GM12878 (cell line): ENCODE measurements at regions of chr12 and their contacts with region 1.

Region 1: GRCh38 chr12:29901585-29901984 is 117.8 kb upstream of the TMTC1 start:
- DNase-seq: no peak
- ATAC-seq: no peak; the same call in 2 of the 3 replicates
- H3K4me3 ChIP-seq: no peak overlapping the region
- H3K27ac ChIP-seq: no peak overlapping the region
- H3K4me1 ChIP-seq: no peaks in the 10 kb centered on the region
- H3K27me3 ChIP-seq: no peaks in the 10 kb centered on the region
- CTCF ChIP-seq: peak in 1 of 3 experiments; percentile 38; a peak in 1 of 6 replicates
- EP300 ChIP-seq: no peak
- POLR2A ChIP-seq: no peak
- RAD21 ChIP-seq: no peak

Region 2: GRCh38 chr12:29889737-29890136 is 11.8 kb before region 1 on chr12:
- CTCF ChIA-PET with region 1: interaction called, 19 read pairs
- POLR2A ChIA-PET with region 1: no interaction called
- RAD21 ChIA-PET with region 1: interaction called, 4 read pairs
- SMC1A ChIA-PET with region 1: interaction called, 9 read pairs
- in situ Hi-C with region 1: no loop called
- intact Hi-C with region 1: no loop called
- DNase-seq: no peak
- ATAC-seq: no peak
- H3K4me3 ChIP-seq: no peak overlapping the region
- H3K27ac ChIP-seq: no peak overlapping the region
- H3K4me1 ChIP-seq: no peaks in the 10 kb centered on the region
- H3K27me3 ChIP-seq: no peaks in the 10 kb centered on the region
- CTCF ChIP-seq: peak; percentile 10 to 44 (median 22); a peak in 3 of 6 replicates
- EP300 ChIP-seq: no peak
- POLR2A ChIP-seq: no peak
- RAD21 ChIP-seq: 0 out of 2 replicates have a peak, but pooled peaks have one; percentile 20

Region 3: DNA sequence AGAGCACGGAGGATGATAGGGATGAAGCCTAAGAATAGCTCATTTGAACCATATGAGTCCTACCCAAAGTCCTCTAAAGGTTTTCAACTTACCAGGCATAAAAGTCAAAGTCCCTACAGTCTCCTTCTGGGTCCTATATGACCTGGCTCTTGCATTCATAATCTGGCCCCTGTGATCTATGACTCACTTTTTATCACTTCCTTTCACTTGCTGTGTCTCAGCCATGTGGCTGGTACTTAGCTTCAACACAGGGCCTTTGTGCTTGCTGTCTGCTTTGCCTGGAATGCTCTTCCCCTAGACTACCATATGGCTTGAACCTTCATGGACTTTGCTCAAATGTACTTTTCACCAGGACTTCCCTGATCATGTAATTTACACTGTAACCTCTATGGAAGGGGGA is 19.7 kb after region 1 on chr12:
- CTCF ChIA-PET with region 1: no interaction called
- POLR2A ChIA-PET with region 1: no interaction called
- RAD21 ChIA-PET with region 1: no interaction called
- SMC1A ChIA-PET with region 1: no interaction called
- in situ Hi-C with region 1: no loop called
- intact Hi-C with region 1: no loop called
- DNase-seq: no peak
- ATAC-seq: peak; percentile 50; the same call in 2 of the 3 replicates
- H3K4me3 ChIP-seq: no peak overlapping the region
- H3K27ac ChIP-seq: no peak overlapping the region
- H3K4me1 ChIP-seq: no peaks in the 10 kb centered on the region
- H3K27me3 ChIP-seq: no peaks in the 10 kb centered on the region
- CTCF ChIP-seq: no peak
- EP300 ChIP-seq: no peak
- POLR2A ChIP-seq: no peak
- RAD21 ChIP-seq: no peak

Region 4: GRCh38 chr12:29940811-29941210 is 39.2 kb after region 1 on chr12:
- CTCF ChIA-PET with region 1: no interaction called
- POLR2A ChIA-PET with region 1: no interaction called
- RAD21 ChIA-PET with region 1: no interaction called
- SMC1A ChIA-PET with region 1: no interaction called
- in situ Hi-C with region 1: no loop called
- intact Hi-C with region 1: no loop called
- DNase-seq: no peak
- ATAC-seq: no peak
- H3K4me3 ChIP-seq: no peak overlapping the region
- H3K27ac ChIP-seq: no peak overlapping the region
- H3K4me1 ChIP-seq: no peaks in the 10 kb centered on the region
- H3K27me3 ChIP-seq: no peaks in the 10 kb centered on the region
- CTCF ChIP-seq: no peak
- EP300 ChIP-seq: no peak
- POLR2A ChIP-seq: no peak
- RAD21 ChIP-seq: no peak

Region 5: DNA sequence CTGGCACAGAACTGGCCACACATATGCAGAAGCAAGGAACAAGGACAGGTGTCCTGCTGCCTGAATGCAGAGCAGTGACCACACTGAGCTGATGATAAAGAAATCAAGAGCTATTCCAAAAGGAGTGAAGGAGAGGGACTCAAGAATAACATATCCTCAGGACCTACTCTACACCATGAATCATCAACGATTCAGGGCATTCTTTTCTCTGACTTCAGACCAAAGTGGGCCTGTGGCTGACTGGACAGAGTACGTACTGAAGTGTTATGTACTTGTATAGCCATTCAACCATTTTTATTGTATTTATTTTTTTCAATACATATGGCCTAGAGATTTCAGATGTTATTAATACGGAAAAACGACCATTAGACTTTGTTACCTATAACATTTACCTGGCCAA is 59.6 kb after region 1 on chr12:
- CTCF ChIA-PET with region 1: no interaction called
- POLR2A ChIA-PET with region 1: no interaction called
- RAD21 ChIA-PET with region 1: no interaction called
- SMC1A ChIA-PET with region 1: no interaction called
- in situ Hi-C with region 1: no loop called
- intact Hi-C with region 1: no loop called
- DNase-seq: no peak
- ATAC-seq: no peak
- H3K4me3 ChIP-seq: no peak overlapping the region
- H3K27ac ChIP-seq: no peak overlapping the region
- H3K4me1 ChIP-seq: no peaks in the 10 kb centered on the region
- H3K27me3 ChIP-seq: no peaks in the 10 kb centered on the region
- CTCF ChIP-seq: no peak
- EP300 ChIP-seq: no peak
- POLR2A ChIP-seq: no peak
- RAD21 ChIP-seq: no peak

Region 6: GRCh38 chr12:29990971-29991370 is 89.4 kb after region 1 on chr12:
- CTCF ChIA-PET with region 1: no interaction called
- POLR2A ChIA-PET with region 1: no interaction called
- RAD21 ChIA-PET with region 1: no interaction called
- SMC1A ChIA-PET with region 1: no interaction called
- in situ Hi-C with region 1: no loop called
- intact Hi-C with region 1: no loop called
- DNase-seq: no peak
- ATAC-seq: no peak
- H3K4me3 ChIP-seq: no peak overlapping the region
- H3K27ac ChIP-seq: no peak overlapping the region
- H3K4me1 ChIP-seq: no peaks in the 10 kb centered on the region
- H3K27me3 ChIP-seq: no peaks in the 10 kb centered on the region
- CTCF ChIP-seq: no peak
- EP300 ChIP-seq: no peak
- POLR2A ChIP-seq: no peak
- RAD21 ChIP-seq: no peak